PC-3 (cell line): ENCODE measurements at regions of chr21 and their contacts with region 1.

Region 1: GRCh38 chr21:37758982-37759381 is 157.3 kb downstream of the KCNJ6 start:
- DNase-seq: peak; percentile 53
- ATAC-seq: peak; percentile 46; the same call in 1 of the 2 replicates
- H3K4me3 ChIP-seq: no peak overlapping the region
- H3K27ac ChIP-seq: no peak overlapping the region
- H3K4me1 ChIP-seq: no peaks in the 10 kb centered on the region
- H3K27me3 ChIP-seq: peaks cover 25% of the 10 kb centered on the region
- CTCF ChIP-seq: peak; percentile 59

Region 2: GRCh38 chr21:37000381-37000780 is 758.6 kb before region 1 on chr21:
- CTCF ChIA-PET with region 1: no interaction called
- POLR2A ChIA-PET with region 1: no interaction called
- intact Hi-C with region 1: no loop called
- DNase-seq: peak; percentile 49
- ATAC-seq: peak; percentile 67; the same call in 1 of the 2 replicates
- H3K4me3 ChIP-seq: no peak overlapping the region
- H3K27ac ChIP-seq: no peak overlapping the region
- H3K4me1 ChIP-seq: no peaks in the 10 kb centered on the region
- H3K27me3 ChIP-seq: no peaks in the 10 kb centered on the region
- CTCF ChIP-seq: peak; percentile 57

Region 3: GRCh38 chr21:38178653-38179506 is 419.9 kb after region 1 on chr21:
- CTCF ChIA-PET with region 1: interaction called, 11 read pairs
- POLR2A ChIA-PET with region 1: no interaction called
- intact Hi-C with region 1: no loop called
- DNase-seq: no peak
- ATAC-seq: no peak
- H3K4me3 ChIP-seq: no peak overlapping the region
- H3K27ac ChIP-seq: no peak overlapping the region
- H3K4me1 ChIP-seq: 0 out of 2 replicates have a peak, but pooled peaks cover 4% of the 10 kb centered on the region
- H3K27me3 ChIP-seq: no peaks in the 10 kb centered on the region
- CTCF ChIP-seq: no peak